PC-3 (cell line): ENCODE measurements at regions of chr1 and their contacts with region 1.

Region 1: DNA sequence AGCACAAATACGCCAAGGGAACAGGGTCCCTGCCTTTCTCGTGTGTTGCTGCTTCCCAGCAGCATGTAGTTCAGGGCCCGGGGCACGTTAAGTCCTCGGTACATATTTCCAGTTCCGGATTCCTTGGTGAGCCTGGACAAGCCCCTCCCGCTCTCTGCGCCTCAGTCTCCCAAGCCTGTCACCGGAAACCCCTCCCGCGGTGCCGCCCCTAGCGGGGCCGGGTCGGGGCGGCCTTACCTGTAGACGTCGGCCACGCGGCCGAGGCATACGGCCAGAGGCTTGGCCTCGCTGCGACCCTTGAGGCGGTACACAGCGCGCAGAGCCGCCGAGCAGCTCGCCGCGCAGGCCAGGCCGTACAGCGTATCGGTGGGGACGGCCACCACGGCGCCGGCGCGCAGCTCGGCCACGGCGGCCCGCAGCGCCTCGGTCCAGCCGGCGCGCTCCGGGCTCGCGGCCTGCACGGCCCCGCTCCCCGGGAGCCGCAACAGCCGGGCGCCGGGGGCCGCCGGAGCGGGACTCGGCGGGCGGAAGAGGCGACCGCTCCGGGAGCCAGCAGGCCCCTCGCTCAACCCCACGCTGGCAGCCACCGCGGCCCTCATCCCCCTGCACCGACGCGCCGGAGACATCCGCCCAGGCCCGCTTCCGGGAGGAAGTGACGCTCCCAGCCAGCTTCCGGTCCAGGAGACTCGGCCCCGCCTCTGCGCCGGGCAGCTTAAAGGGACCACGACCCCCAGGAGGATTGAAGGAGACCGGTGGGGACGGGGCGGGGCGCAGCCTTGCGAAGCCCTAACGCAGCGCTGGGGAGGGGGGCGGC is at the starts of genes C1orf122 and YRDC:
- DNase-seq: peak; percentile 92
- ATAC-seq: peak; percentile 79
- H3K4me3 ChIP-seq: peak within 1 kb of the TSS; percentile 81
- H3K27ac ChIP-seq: 0 out of 2 replicates have a peak within 1 kb of the TSS, but pooled peaks have one; percentile 21
- H3K4me1 ChIP-seq: peaks cover 27% of the 10 kb centered on the region
- H3K27me3 ChIP-seq: no peaks in the 10 kb centered on the region
- CTCF ChIP-seq: no peak
- total RNA-seq, gene C1orf122: 70.1 and 72.5 TPM in 2 replicates
- total RNA-seq, gene YRDC: 41.8 and 51.9 TPM in 2 replicates

Region 2: GRCh38 chr1:37479255-37480124 is 328.3 kb before region 1 on chr1:
- CTCF ChIA-PET with region 1: no interaction called
- POLR2A ChIA-PET with region 1: interaction called, 14 read pairs
- intact Hi-C with region 1: no loop called
- DNase-seq: peak; percentile 98
- ATAC-seq: peak; percentile 42
- H3K4me3 ChIP-seq: peak overlapping the region; percentile 71
- H3K27ac ChIP-seq: peak overlapping the region; percentile 97
- H3K4me1 ChIP-seq: peaks cover 58% of the 10 kb centered on the region
- H3K27me3 ChIP-seq: no peaks in the 10 kb centered on the region
- CTCF ChIP-seq: no peak

Region 3: DNA sequence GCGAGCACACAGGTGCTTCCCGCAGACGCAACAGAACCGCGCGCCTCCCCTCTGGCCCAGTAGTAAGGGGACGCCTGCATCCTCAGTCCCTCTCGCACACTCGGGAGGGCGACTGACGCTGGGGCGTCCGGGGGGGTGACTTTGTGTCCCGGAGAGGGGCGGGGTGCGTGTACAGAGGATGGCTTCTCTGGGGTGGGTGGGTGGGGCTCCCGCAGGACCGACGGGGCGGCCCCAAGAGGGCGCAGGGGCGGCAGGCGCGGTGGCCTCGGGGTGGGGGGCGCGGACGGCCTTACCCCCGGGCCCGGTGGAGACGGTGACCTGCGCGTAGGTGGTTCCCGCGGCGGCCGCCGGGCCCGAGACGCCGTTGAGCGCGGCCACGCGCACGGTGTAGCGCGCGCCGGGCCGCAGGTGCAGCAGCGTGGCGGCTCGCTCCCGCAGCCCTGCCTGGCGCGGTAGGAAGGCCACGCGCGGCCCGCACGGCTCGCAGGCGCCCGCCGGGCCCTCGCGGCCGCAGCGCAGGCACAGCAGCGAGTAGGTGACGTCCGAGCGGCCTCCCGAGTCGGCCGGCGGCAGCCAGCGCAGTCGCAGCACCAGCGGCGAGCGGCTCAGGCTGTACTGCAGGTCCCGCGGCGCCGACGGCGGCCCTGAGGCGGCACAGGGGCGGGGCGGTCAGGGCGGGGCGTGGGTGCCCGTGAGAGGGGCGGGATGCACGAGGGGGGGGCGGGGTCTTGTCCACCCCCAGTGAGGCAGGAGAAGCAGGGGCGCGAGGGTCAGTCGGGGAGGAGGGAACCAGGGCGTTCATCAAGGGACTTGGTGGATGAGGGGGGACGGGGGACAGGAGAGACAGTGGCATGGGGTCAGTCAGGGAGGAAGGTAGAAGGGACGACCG is 54.9 kb before region 1 on chr1:
- CTCF ChIA-PET with region 1: no interaction called
- POLR2A ChIA-PET with region 1: no interaction called
- intact Hi-C with region 1: no loop called
- DNase-seq: peak; percentile 35
- ATAC-seq: peak; percentile 78
- H3K4me3 ChIP-seq: peak overlapping the region; percentile 59
- H3K27ac ChIP-seq: no peak overlapping the region
- H3K4me1 ChIP-seq: peaks cover 5% of the 10 kb centered on the region; the same call in 1 of the 2 replicates
- H3K27me3 ChIP-seq: no peaks in the 10 kb centered on the region
- CTCF ChIP-seq: no peak

Region 4: GRCh38 chr1:37859507-37860345 is 52.0 kb after region 1 on chr1 and contains the start of gene MTF1:
- CTCF ChIA-PET with region 1: interaction called, 27 read pairs
- POLR2A ChIA-PET with region 1: interaction called, 5 read pairs
- intact Hi-C with region 1: loop called (anchors 1 kb)
- DNase-seq: peak; percentile 97
- ATAC-seq: peak; percentile 93
- H3K4me3 ChIP-seq: peak within 1 kb of the TSS; percentile 92
- H3K27ac ChIP-seq: peak within 1 kb of the TSS; percentile 90
- H3K4me1 ChIP-seq: peaks cover 35% of the 10 kb centered on the region
- H3K27me3 ChIP-seq: no peaks in the 10 kb centered on the region
- CTCF ChIP-seq: peak; percentile 91
- total RNA-seq, gene MTF1: 5.4 and 10.7 TPM in 2 replicates

Region 5: GRCh38 chr1:38586993-38587646 is 779.4 kb after region 1 on chr1:
- CTCF ChIA-PET with region 1: no interaction called
- POLR2A ChIA-PET with region 1: interaction called, 24 read pairs
- intact Hi-C with region 1: no loop called
- DNase-seq: peak; percentile 52
- ATAC-seq: no peak; the same call in 1 of the 2 replicates
- H3K4me3 ChIP-seq: no peak overlapping the region
- H3K27ac ChIP-seq: no peak overlapping the region
- H3K4me1 ChIP-seq: no peaks in the 10 kb centered on the region
- H3K27me3 ChIP-seq: peaks cover 4% of the 10 kb centered on the region; the same call in 1 of the 2 replicates
- CTCF ChIP-seq: peak; percentile 83